ENCODE measurements at regions of chr1 and their contacts with region 1.

Region 1: DNA sequence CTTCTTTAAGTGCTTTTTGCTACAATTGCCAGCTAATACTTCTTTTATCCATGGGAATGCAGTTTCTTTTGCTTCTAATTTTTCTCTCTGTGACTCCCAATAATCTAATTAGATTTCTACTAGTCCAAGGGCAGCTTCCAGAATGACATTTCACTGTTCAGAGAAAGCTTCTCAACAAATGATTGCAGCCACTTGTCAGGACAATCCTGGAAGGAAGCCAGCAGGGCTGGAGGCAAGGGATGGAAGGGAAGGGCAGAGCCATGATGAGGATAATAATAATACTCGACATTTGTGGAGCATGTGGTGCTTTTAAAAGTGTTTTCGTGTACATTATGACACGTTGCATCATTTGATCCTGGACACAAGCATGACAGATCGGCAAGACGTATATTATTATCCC is 19.4 kb downstream of the F11R start:
- DNase-seq: no peak
- H3K4me3 ChIP-seq: no peak overlapping the region
- H3K27ac ChIP-seq: no peak overlapping the region
- H3K4me1 ChIP-seq: peaks cover 0 to 10% (median 2%) of the 10 kb centered on the region in 3 donors
- H3K27me3 ChIP-seq: no peaks in the 10 kb centered on the region
- CTCF ChIP-seq: no peak

Region 2: DNA sequence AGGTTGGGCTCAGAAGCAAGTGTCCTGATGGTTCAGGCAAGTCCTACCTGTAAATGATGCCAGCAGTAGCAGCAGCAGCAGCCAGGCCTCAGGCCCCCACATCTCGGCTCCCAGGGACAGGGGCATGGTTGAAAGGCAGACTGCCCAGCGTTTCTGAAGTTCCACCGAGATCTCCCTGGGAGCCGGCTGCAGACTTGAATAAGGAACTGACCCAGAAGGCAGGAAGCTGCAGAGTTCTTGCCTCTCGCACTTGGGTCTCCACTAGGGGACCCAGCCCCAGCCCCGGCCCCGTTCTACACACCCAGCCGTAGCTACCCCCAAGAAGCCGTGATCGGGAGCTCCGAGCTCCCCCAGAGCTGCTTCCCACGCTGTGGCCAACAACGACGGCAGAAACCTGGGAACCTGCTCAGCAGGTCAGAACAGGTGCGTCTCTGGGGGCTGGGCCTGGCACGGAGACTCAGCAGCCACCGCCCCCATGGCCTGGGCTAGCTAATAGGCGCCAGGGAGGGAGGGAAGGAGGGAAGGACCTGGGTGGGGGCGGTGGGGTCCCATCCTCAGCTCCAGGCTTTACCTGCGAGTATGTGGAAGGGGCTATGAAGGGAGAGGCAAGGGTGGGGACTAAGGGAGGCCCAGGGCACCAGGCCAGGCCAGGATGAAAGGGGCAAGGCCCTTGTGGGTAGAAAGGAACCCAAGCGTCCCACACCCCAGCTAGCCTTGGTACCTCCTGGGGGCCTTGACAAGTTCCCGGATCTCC is 87.8 kb after region 1 on chr1 and contains the start of gene NECTIN4:
- intact Hi-C with region 1: loop called (anchors 5 kb)
- DNase-seq: peak; percentile 61 to 89 (median 69)
- H3K4me3 ChIP-seq: peak within 1 kb of the TSS in 2 of 3 donors; percentile 34 to 45
- H3K27ac ChIP-seq: peak within 1 kb of the TSS; percentile 69 to 72
- H3K4me1 ChIP-seq: peaks cover 0 to 9% (median 4%) of the 10 kb centered on the region in 3 donors
- H3K27me3 ChIP-seq: no peaks in the 10 kb centered on the region
- CTCF ChIP-seq: no peak
- total RNA-seq, gene NECTIN4: 12.8 TPM